Naive thymus-derived CD8-positive, alpha-beta T cell (primary cell): ENCODE measurements at regions of chr6 and their contacts with region 1.

Region 1: DNA sequence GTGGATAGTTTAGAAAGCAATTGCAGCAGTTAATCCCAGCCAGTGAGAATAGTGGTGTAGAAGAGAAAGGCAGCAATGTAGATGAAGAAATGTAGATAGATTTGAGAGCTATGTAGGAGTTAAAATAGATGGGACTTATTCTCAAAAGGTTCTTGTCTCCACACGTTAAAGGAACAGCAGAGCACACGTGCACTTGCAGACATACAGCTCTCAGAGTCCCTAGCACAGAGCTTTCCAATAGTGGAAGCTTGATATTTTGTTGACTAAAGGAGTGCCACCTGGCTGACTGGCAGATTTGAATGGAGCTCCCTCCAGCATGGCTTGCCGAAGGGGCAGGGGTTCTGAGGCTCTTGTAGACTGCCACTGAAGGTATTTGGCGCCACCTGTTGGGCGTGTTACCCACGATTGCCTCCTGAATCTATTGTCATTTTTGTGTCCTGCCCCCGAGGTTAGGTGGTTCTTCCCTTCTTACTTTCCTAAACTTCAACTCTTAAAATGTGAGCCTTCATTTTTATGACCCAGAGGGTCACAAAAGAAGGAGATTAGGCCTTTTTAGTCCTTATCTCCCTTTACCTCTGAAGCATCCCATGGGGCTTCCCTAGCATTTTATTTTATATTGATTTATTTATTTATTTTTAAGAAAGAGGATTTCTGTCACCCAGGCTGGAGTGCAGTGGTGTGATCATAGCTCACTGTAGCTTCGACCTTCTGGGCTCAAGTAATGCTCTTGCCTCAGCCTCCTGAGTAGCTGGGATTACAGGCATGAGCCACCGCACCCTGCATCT is 16.4 kb downstream of the BRD2 start:
- DNase-seq: peak; percentile 78 to 95 (median 87)
- ATAC-seq: peak; percentile 88 to 99
- H3K4me3 Mint-ChIP-seq: no peak overlapping the region
- H3K27ac Mint-ChIP-seq: peak overlapping the region in 9 of 10 donors; percentile 14 to 84 (median 67)
- H3K4me1 Mint-ChIP-seq: peaks cover 9 to 30% (median 25%) of the 10 kb centered on the region in 4 donors
- H3K27me3 Mint-ChIP-seq: no peaks in the 10 kb centered on the region

Region 2: DNA sequence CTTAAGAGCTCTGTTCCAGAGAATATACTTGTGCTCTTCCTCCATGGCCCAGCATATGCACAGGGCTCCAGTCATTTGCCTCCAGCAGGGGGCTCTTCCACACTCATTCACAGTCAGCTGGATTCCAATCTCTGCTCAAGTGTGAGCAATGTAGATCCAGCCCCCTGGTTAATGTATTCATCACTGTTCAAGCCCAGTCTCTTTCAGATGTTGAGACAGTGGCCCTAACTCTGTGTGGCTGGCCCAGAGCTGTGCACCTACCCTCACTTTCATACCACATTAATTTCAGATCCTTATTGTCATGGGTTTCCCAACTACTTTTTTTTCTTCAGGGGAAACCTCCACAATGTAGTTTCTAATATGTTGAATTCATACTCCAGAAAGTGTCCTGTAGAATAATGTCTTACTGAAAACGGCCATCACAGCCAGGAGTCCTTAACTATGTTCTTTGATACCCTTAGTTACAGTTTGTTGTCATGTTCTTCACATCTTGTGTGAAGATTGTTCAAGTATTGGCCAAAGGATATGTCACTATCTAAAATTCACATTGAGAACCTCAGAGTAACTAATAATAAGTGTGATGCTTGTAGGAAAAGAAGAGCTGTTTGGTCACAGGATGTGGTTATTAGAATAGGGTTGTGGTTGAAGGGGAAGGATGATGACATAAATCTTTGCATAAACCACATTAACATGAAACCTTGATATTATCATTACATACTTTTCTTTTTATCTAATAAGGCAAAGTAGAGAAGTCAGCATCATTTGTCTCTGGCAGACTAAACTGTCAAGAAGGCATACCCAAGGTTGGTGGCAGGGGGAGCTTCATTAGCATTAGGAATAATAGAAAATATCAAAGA is 362.0 kb before region 1 on chr6:
- POLR2A ChIA-PET with region 1: no interaction called
- DNase-seq: peak; percentile 5 to 87 (median 50)
- ATAC-seq: peak; percentile 74 to 87
- H3K4me3 Mint-ChIP-seq: peak overlapping the region in 9 of 10 donors; percentile 29 to 68 (median 52)
- H3K27ac Mint-ChIP-seq: peak overlapping the region; percentile 60 to 94 (median 88)
- H3K4me1 Mint-ChIP-seq: peaks cover 21 to 60% (median 34%) of the 10 kb centered on the region in 4 donors
- H3K27me3 Mint-ChIP-seq: no peaks in the 10 kb centered on the region

Region 3: GRCh38 chr6:32885698-32886286 is 99.0 kb before region 1 on chr6:
- POLR2A ChIA-PET with region 1: interaction called, 10 read pairs
- DNase-seq: peak in 3 of 10 donors; percentile 74 to 78 (median 76)
- ATAC-seq: peak; percentile 61 to 67
- H3K4me3 Mint-ChIP-seq: no peak overlapping the region
- H3K27ac Mint-ChIP-seq: peak overlapping the region in 1 of 10 donors; percentile 58
- H3K4me1 Mint-ChIP-seq: peaks cover 0 to 5% (median 2%) of the 10 kb centered on the region in 4 donors
- H3K27me3 Mint-ChIP-seq: no peaks in the 10 kb centered on the region